AG04450 (cell line): ENCODE measurements at regions of chr12 and their contacts with region 1.

Region 1: DNA sequence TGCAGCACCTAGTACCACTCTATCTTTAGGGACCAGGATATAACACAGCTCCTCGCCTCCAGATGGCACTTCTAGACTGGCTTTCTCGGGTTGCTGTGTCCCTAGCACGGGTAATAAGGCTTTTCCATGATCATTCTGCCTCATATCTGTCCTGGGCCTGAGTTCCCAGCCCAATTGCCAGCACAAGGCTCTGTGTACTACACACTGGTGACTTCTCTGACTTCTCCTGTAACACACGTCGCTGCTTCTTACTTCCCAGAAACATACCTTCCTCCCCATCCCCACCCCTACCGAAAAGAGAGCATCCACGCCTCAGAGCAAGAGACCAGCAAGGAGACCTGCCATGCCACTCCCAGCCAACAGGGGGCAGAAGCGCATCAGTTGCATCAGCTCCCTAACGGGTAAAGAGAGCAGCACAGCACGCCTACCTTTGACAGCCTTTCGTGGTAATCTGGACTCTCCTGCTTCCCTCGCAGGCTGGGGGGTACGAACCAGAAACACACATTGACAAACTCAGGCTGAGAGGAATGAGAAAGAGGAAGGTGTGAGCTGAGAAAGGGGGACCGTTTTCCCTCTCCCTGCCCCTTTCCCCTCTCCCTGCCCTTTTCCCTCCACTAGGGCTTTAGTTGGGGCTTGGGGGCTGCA is 21.2 kb upstream of the ZNF740 start:
- DNase-seq: peak; percentile 42
- H3K4me3 ChIP-seq: no peak overlapping the region
- H3K27ac ChIP-seq: no peak overlapping the region
- H3K27me3 ChIP-seq: no peaks in the 10 kb centered on the region
- CTCF ChIP-seq: peak; percentile 99

Region 2: GRCh38 chr12:53055471-53056266 is 103.6 kb before region 1 on chr12:
- CTCF ChIA-PET with region 1: no interaction called
- POLR2A ChIA-PET with region 1: no interaction called
- DNase-seq: no peak
- H3K4me3 ChIP-seq: no peak overlapping the region
- H3K27ac ChIP-seq: peak overlapping the region; percentile 11
- H3K27me3 ChIP-seq: no peaks in the 10 kb centered on the region
- CTCF ChIP-seq: no peak

Region 3: GRCh38 chr12:53079226-53080117 is 79.8 kb before region 1 on chr12 and contains the start of gene SPRYD3:
- CTCF ChIA-PET with region 1: interaction called, 11 read pairs
- POLR2A ChIA-PET with region 1: interaction called, 3 read pairs
- DNase-seq: peak; percentile 94
- H3K4me3 ChIP-seq: peak within 1 kb of the TSS; percentile 69
- H3K27ac ChIP-seq: peak within 1 kb of the TSS; percentile 97
- H3K27me3 ChIP-seq: no peaks in the 10 kb centered on the region
- CTCF ChIP-seq: no peak
- polyA plus RNA-seq, gene SPRYD3: 15.4 and 17.6 TPM in 2 replicates

Region 4: GRCh38 chr12:53190108-53190729 is 30.9 kb after region 1 on chr12:
- CTCF ChIA-PET with region 1: interaction called, 20 read pairs
- POLR2A ChIA-PET with region 1: no interaction called
- DNase-seq: no peak
- H3K4me3 ChIP-seq: no peak overlapping the region
- H3K27ac ChIP-seq: no peak overlapping the region
- H3K27me3 ChIP-seq: no peaks in the 10 kb centered on the region
- CTCF ChIP-seq: peak; percentile 89

Region 5: GRCh38 chr12:53287741-53288216 is 128.5 kb after region 1 on chr12:
- CTCF ChIA-PET with region 1: interaction called, 10 read pairs
- POLR2A ChIA-PET with region 1: no interaction called
- DNase-seq: no peak
- H3K4me3 ChIP-seq: no peak overlapping the region
- H3K27ac ChIP-seq: no peak overlapping the region
- H3K27me3 ChIP-seq: no peaks in the 10 kb centered on the region
- CTCF ChIP-seq: peak; percentile 65